T-cell (primary cell): ENCODE measurements at regions of chr1 and their contacts with region 1.

Region 1: GRCh38 chr1:17008208-17008855 is 3.4 kb downstream of the ATP13A2 start:
- DNase-seq: no peak
- ATAC-seq: no peak
- H3K4me3 ChIP-seq: no peak overlapping the region
- H3K4me3 Mint-ChIP-seq: no peak overlapping the region
- H3K27ac ChIP-seq: no peak overlapping the region
- H3K27ac Mint-ChIP-seq: no peak overlapping the region
- H3K4me1 ChIP-seq: peaks cover 7 to 24% of the 10 kb centered on the region in 2 experiments
- H3K4me1 Mint-ChIP-seq: peaks cover 19 to 23% (median 22%) of the 10 kb centered on the region in 3 donors
- H3K27me3 ChIP-seq: no peaks in the 10 kb centered on the region
- H3K27me3 Mint-ChIP-seq: no peaks in the 10 kb centered on the region

Region 2: DNA sequence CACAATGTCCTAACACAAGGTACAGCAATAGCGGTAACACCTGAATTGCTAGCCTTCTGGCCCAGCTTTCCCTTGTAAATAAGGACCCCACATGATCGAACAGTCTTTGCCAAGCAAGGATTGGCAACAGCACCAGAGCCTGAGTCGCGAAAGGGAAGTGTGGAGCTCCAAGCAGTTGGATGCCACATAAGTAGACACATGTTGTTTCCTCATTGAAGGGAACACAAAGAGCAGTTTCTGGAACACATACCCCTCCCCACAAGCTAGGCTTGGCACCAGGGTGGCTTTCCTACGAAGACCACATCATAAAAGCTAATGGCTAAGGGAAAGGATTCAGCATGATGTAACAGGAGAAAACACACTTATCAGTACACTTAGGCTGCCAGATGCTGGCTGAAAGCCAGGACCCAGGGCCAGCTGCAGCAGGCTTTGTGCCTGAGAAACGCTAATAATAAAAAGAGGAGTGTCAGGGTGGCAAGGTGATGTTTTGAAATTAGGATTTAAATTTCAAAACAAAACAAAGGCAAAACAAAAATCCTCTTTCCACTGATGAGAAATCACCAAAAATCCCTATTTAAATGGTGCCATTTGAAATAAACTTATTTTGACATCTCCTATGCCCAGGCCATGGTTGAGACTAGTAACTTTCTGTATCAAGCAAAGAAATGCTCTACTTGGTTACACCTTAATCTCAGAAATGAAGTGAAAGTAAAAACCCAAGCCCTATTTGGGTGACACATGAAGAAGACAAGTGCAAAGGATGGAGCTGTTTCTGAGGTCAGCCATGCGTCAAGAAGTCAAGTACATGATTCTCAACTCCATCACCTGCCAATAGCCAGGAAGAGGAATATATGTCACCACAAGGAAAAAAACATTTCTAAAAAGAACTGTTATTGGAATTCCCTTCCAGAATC is 759.5 kb before region 1 on chr1:
- CTCF ChIA-PET with region 1: no interaction called
- POLR2A ChIA-PET with region 1: no interaction called
- DNase-seq: no peak
- ATAC-seq: peak in 1 of 4 experiments; percentile 50
- H3K4me3 ChIP-seq: no peak overlapping the region
- H3K4me3 Mint-ChIP-seq: no peak overlapping the region
- H3K27ac ChIP-seq: no peak overlapping the region
- H3K27ac Mint-ChIP-seq: peak overlapping the region; percentile 61 to 82
- H3K4me1 ChIP-seq: peaks cover 0 to 8% of the 10 kb centered on the region in 2 experiments
- H3K4me1 Mint-ChIP-seq: peaks cover 19 to 22% (median 21%) of the 10 kb centered on the region in 3 donors
- H3K27me3 ChIP-seq: no peaks in the 10 kb centered on the region
- H3K27me3 Mint-ChIP-seq: no peaks in the 10 kb centered on the region

Region 3: GRCh38 chr1:16958503-16958902 is 49.8 kb before region 1 on chr1:
- CTCF ChIA-PET with region 1: no interaction called
- POLR2A ChIA-PET with region 1: no interaction called
- DNase-seq: no peak
- ATAC-seq: no peak
- H3K4me3 ChIP-seq: no peak overlapping the region
- H3K4me3 Mint-ChIP-seq: no peak overlapping the region
- H3K27ac ChIP-seq: no peak overlapping the region
- H3K27ac Mint-ChIP-seq: no peak overlapping the region
- H3K4me1 ChIP-seq: peaks cover 0 to 11% of the 10 kb centered on the region in 2 experiments
- H3K4me1 Mint-ChIP-seq: peaks cover 13 to 14% (median 14%) of the 10 kb centered on the region in 3 donors
- H3K27me3 ChIP-seq: no peaks in the 10 kb centered on the region
- H3K27me3 Mint-ChIP-seq: no peaks in the 10 kb centered on the region

Region 4: GRCh38 chr1:16996837-16997236 is 11.5 kb before region 1 on chr1:
- CTCF ChIA-PET with region 1: no interaction called
- POLR2A ChIA-PET with region 1: interaction called in 1 of 2 experiments, 16 read pairs
- DNase-seq: no peak
- ATAC-seq: no peak
- H3K4me3 ChIP-seq: no peak overlapping the region
- H3K4me3 Mint-ChIP-seq: no peak overlapping the region
- H3K27ac ChIP-seq: no peak overlapping the region
- H3K27ac Mint-ChIP-seq: no peak overlapping the region
- H3K4me1 ChIP-seq: no peaks in the 10 kb centered on the region
- H3K4me1 Mint-ChIP-seq: no peaks in the 10 kb centered on the region
- H3K27me3 ChIP-seq: no peaks in the 10 kb centered on the region
- H3K27me3 Mint-ChIP-seq: no peaks in the 10 kb centered on the region

Region 5: DNA sequence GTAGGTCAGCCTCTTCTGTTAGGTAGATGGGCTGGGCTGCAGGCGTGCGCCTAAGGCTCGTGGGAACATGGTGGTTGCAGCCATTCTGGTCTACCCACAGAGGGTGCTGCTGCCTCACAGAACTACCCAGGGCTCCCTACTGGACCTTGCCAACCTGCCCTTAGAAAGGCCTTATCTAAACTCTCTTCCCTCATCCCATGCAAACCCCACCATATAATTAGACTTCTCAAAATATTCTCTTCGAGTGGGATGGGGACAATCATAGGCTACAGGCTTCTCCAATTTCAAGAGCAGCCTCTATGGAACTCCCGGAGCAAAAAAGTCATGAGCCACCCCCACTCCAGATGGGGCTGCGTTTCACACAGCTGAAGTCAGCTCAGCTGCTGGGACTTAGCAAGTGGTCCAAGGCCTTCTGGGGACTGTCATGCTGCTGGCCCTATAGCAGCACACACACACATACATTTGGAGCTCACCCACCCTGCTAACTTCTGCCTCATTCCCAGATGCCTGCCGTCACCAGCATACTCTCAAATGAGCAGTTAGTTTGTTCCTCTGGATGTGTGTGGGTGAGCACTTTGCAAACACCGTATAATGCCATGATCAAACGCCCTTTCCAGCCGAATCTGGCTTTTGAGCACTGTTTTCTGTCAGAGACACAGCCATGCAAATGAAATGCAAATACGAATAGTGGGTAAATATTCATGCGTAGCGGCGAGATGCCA is 51.6 kb after region 1 on chr1:
- CTCF ChIA-PET with region 1: no interaction called
- POLR2A ChIA-PET with region 1: no interaction called
- DNase-seq: peak in 20 of 35 experiments; percentile 3 to 46 (median 16)
- ATAC-seq: peak; percentile 43 to 73 (median 70)
- H3K4me3 ChIP-seq: no peak overlapping the region
- H3K4me3 Mint-ChIP-seq: no peak overlapping the region
- H3K27ac ChIP-seq: no peak overlapping the region
- H3K27ac Mint-ChIP-seq: no peak overlapping the region
- H3K4me1 ChIP-seq: no peaks in the 10 kb centered on the region
- H3K4me1 Mint-ChIP-seq: peaks cover 0 to 2% (median 0%) of the 10 kb centered on the region in 3 donors
- H3K27me3 ChIP-seq: peaks cover 2 to 6% of the 10 kb centered on the region in 2 experiments
- H3K27me3 Mint-ChIP-seq: peaks cover 3 to 16% of the 10 kb centered on the region in 2 donors